ENCODE measurements at regions of chr6 and their contacts with region 1.

Region 1: DNA sequence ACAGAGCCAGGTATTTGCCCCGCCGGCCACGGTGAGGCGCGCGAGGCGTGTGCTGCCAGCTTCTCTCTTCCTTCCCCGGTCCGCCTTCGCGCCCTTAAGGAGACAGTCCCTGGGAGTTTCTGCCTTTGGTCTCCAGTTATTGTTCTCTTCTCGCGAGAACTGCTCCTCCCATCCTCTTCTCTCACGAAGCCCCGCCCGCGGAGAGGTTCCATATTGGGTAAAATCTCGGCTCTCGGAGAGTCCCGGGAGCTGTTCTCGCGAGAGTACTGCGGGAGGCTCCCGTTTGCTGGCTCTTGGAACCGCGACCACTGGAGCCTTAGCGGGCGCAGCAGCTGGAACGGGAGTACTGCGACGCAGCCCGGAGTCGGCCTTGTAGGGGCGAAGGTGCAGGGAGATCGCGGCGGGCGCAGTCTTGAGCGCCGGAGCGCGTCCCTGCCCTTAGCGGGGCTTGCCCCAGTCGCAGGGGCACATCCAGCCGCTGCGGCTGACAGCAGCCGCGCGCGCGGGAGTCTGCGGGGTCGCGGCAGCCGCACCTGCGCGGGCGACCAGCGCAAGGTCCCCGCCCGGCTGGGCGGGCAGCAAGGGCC is at the start of gene MAPK14:
- DNase-seq: peak; percentile 92
- ATAC-seq: peak; percentile 91
- H3K4me3 Mint-ChIP-seq: peak within 1 kb of the TSS; percentile 92
- H3K27ac Mint-ChIP-seq: peak within 1 kb of the TSS; percentile 95
- H3K4me1 Mint-ChIP-seq: peaks cover 40% of the 10 kb centered on the region
- H3K27me3 Mint-ChIP-seq: peaks cover 16% of the 10 kb centered on the region
- CTCF ChIP-seq: no peak
- total RNA-seq, gene MAPK14: 39.7 and 45.4 TPM in 2 replicates

Region 2: GRCh38 chr6:35522660-35523658 is 504.6 kb before region 1 on chr6:
- CTCF ChIA-PET with region 1: no interaction called
- POLR2A ChIA-PET with region 1: no interaction called
- intact Hi-C with region 1: loop called (anchors 2 kb)
- DNase-seq: peak; percentile 54
- ATAC-seq: peak; percentile 96
- H3K4me3 Mint-ChIP-seq: peak overlapping the region; percentile 69
- H3K27ac Mint-ChIP-seq: no peak overlapping the region
- H3K4me1 Mint-ChIP-seq: peaks cover 8% of the 10 kb centered on the region
- H3K27me3 Mint-ChIP-seq: peaks cover 3% of the 10 kb centered on the region
- CTCF ChIP-seq: peak; percentile 98

Region 3: GRCh38 chr6:36094753-36095496 is 67.3 kb after region 1 on chr6:
- CTCF ChIA-PET with region 1: interaction called, 83 read pairs
- POLR2A ChIA-PET with region 1: interaction called, 31 read pairs
- intact Hi-C with region 1: loop called (anchors 1 kb)
- DNase-seq: peak; percentile 70
- ATAC-seq: peak; percentile 93
- H3K4me3 Mint-ChIP-seq: no peak overlapping the region
- H3K27ac Mint-ChIP-seq: peak overlapping the region; percentile 30
- H3K4me1 Mint-ChIP-seq: peaks cover 33% of the 10 kb centered on the region
- H3K27me3 Mint-ChIP-seq: no peaks in the 10 kb centered on the region
- CTCF ChIP-seq: peak; percentile 32

Region 4: GRCh38 chr6:36196880-36197548 is 169.4 kb after region 1 on chr6:
- CTCF ChIA-PET with region 1: interaction called, 9 read pairs
- POLR2A ChIA-PET with region 1: interaction called, 26 read pairs
- intact Hi-C with region 1: loop called (anchors 1 kb)
- DNase-seq: peak; percentile 100
- ATAC-seq: peak; percentile 89
- H3K4me3 Mint-ChIP-seq: peak overlapping the region; percentile 92
- H3K27ac Mint-ChIP-seq: peak overlapping the region; percentile 92
- H3K4me1 Mint-ChIP-seq: peaks cover 38% of the 10 kb centered on the region
- H3K27me3 Mint-ChIP-seq: no peaks in the 10 kb centered on the region
- CTCF ChIP-seq: no peak

Region 5: DNA sequence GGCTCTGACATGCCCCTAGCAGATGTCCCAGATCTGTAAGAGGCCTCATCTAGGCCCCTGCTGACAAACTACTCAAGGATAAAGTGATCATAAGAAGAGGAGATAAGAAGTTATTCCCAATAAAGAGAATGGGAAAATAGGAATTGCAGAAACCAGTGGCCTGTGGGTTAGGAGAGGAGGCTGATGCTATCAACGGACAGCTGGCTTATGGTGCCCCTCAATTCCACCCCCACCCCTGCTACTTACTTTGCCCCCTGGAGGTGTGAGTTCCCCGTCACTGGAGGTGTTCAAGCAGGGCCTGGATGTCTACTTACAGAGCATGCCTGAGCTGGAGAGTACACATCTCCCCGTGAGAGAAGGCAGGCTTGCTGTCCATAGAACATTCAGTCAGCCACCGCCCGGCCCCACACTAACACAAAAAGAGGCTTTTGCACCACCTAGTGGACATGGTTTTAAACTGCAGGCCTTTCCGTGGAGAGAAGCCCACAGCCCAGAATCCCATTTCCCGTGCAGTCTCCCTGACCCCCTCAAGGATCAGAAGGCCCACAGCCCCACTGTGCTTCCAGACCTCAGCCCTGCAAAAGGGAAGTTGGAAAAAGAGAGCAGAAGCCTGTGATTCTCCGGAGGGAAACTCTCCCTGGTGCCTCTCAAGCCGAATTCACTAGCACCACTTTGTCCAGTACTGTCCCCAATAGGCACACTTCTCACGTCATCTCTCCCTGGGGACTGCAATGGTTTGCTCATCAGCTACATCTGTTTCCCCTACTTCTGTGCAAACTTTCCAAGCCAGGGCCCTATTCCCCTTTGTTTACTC is 332.9 kb after region 1 on chr6:
- CTCF ChIA-PET with region 1: interaction called, 10 read pairs
- POLR2A ChIA-PET with region 1: no interaction called
- intact Hi-C with region 1: loop called (anchors 1 kb)
- DNase-seq: peak; percentile 45
- ATAC-seq: peak; percentile 89
- H3K4me3 Mint-ChIP-seq: no peak overlapping the region
- H3K27ac Mint-ChIP-seq: no peak overlapping the region
- H3K4me1 Mint-ChIP-seq: peaks cover 30% of the 10 kb centered on the region
- H3K27me3 Mint-ChIP-seq: peaks cover 2% of the 10 kb centered on the region
- CTCF ChIP-seq: no peak

Region 6: GRCh38 chr6:36780442-36781177 is 753.0 kb after region 1 on chr6:
- CTCF ChIA-PET with region 1: no interaction called
- POLR2A ChIA-PET with region 1: no interaction called
- intact Hi-C with region 1: no loop called
- DNase-seq: no peak
- ATAC-seq: peak; percentile 35
- H3K4me3 Mint-ChIP-seq: peak overlapping the region; percentile 17
- H3K27ac Mint-ChIP-seq: peak overlapping the region; percentile 76
- H3K4me1 Mint-ChIP-seq: peaks cover 25% of the 10 kb centered on the region
- H3K27me3 Mint-ChIP-seq: peaks cover 10% of the 10 kb centered on the region
- CTCF ChIP-seq: no peak

Measured in activated B cell treated with CpG ODN at 0.5 μM for 24 hours (primary cell).